ENCODE measurements at regions of chr22 and their contacts with region 1.

Region 1: DNA sequence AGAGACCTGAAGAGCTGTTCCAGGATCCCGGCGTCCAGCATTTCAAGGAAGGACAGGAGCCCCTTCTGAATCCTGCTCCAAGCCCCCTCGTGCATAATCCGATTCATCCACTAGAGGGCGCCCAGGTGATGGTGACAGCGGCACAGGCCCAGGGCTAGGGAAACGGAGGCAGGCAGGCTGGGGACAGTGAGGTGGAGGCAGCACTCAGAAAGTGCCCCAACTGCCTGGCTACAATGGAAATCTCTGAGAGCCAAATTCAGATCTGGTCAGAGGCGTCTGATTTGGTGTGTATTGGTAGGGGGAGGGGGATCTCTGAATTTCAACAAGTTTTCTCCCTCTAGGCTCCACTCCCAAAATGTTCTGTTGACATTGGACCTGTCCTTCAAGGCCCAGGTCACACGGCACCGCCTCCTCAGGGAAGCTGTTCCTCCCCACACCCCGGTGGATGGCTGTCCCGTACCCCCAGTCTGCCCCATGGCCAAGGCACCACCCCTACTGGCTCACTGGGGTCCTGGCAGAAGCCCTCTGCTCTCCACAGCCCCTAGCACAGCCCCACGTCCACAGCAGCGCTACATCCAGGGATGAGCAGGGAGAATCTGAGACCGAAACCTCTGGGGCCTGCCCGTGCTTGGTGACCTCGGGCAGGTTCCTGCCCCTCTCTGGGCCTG is 142.9 kb downstream of the CRYBB2 start:
- DNase-seq: peak; percentile 45 to 74 (median 62)
- H3K4me3 ChIP-seq: no peak overlapping the region
- H3K27ac ChIP-seq: no peak overlapping the region
- H3K27me3 ChIP-seq: no peaks in the 10 kb centered on the region
- CTCF ChIP-seq: peak in 55 of 56 donors; percentile 54 to 98 (median 81)

Region 2: GRCh38 chr22:25404928-25405816 is 42.8 kb after region 1 on chr22:
- intact Hi-C with region 1: loop called in 1 of 2 experiments (anchors 5 kb)
- DNase-seq: peak; percentile 41 to 83 (median 66)
- H3K4me3 ChIP-seq: peak overlapping the region; percentile 51 to 91 (median 72)
- H3K27ac ChIP-seq: peak overlapping the region in 37 of 59 donors; percentile 20 to 89 (median 71)
- H3K27me3 ChIP-seq: no peaks in the 10 kb centered on the region
- CTCF ChIP-seq: peak in 2 of 56 donors; percentile 2 to 9

Region 3: DNA sequence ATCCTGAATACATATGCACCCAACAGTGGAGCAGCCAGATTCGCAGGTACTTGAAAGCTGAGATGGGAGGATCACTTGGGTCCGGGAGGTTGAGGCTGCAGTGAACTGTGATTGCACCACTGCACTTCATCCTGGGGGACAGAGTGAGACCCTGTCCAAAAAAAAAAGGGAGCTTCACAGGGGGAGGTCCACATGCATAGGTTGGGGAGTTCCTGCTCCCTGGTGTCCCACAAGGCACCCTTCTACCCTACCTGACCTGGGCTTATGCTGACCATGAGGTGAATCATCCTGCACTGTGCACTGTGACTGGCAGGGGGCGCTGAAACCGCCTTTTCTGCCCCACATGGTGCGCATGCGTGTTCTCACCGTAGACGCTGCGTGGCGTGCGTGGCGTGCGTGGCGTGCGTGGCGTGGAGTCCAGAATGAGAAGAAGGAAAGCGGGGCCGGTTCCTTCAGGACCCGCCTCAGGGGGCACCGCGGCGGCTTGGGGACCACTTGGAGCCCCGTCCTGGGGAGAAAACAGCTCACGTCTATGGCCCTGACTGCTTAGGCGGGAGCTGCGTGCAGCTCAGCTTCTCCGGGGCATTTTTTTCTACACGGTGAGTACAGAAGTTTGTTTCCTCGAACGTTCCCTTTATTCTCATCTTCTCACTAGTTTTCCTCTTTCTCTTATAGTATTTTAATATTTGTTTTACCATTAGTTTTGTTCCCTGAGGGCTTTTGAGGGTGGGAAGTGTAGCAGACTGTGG is 85.5 kb after region 1 on chr22:
- intact Hi-C with region 1: loop called in 1 of 2 experiments (anchors 2 kb)
- DNase-seq: peak; percentile 76 to 94 (median 88)
- H3K4me3 ChIP-seq: peak overlapping the region; percentile 54 to 98 (median 85)
- H3K27ac ChIP-seq: peak overlapping the region in 46 of 59 donors; percentile 10 to 88 (median 66)
- H3K27me3 ChIP-seq: no peaks in the 10 kb centered on the region
- CTCF ChIP-seq: peak; percentile 87 to 100 (median 97)